ENCODE measurements at regions of chr19 and their contacts with region 1.

Region 1: GRCh38 chr19:39445265-39446111 is at the start of gene SUPT5H:
- DNase-seq: peak; percentile 97
- H3K4me3 Mint-ChIP-seq: peak within 1 kb of the TSS; percentile 91
- H3K27ac Mint-ChIP-seq: peak within 1 kb of the TSS; percentile 94
- H3K4me1 Mint-ChIP-seq: peaks cover 41% of the 10 kb centered on the region
- H3K27me3 Mint-ChIP-seq: no peaks in the 10 kb centered on the region
- total RNA-seq, gene SUPT5H: 200 and 203 TPM in 2 replicates

Region 2: GRCh38 chr19:39319892-39320248 is 125.6 kb before region 1 on chr19:
- intact Hi-C with region 1: no loop called
- DNase-seq: no peak
- H3K4me3 Mint-ChIP-seq: peak overlapping the region; percentile 81
- H3K27ac Mint-ChIP-seq: no peak overlapping the region
- H3K4me1 Mint-ChIP-seq: peaks cover 23% of the 10 kb centered on the region
- H3K27me3 Mint-ChIP-seq: no peaks in the 10 kb centered on the region

Region 3: GRCh38 chr19:39341719-39342604 is 103.5 kb before region 1 on chr19 and contains the start of gene SAMD4B:
- intact Hi-C with region 1: loop called (anchors 1 kb)
- DNase-seq: peak; percentile 99
- H3K4me3 Mint-ChIP-seq: peak within 1 kb of the TSS; percentile 99
- H3K27ac Mint-ChIP-seq: peak within 1 kb of the TSS; percentile 96
- H3K4me1 Mint-ChIP-seq: peaks cover 73% of the 10 kb centered on the region
- H3K27me3 Mint-ChIP-seq: no peaks in the 10 kb centered on the region
- total RNA-seq, gene SAMD4B: 71.3 and 71.8 TPM in 2 replicates

Region 4: GRCh38 chr19:39480337-39481228 is 35.1 kb after region 1 on chr19 and contains the start of gene TIMM50:
- intact Hi-C with region 1: loop called (anchors 1 kb)
- DNase-seq: peak; percentile 96
- H3K4me3 Mint-ChIP-seq: peak within 1 kb of the TSS; percentile 95
- H3K27ac Mint-ChIP-seq: peak within 1 kb of the TSS; percentile 94
- H3K4me1 Mint-ChIP-seq: peaks cover 28% of the 10 kb centered on the region
- H3K27me3 Mint-ChIP-seq: no peaks in the 10 kb centered on the region
- total RNA-seq, gene TIMM50: 121 and 127 TPM in 2 replicates

Region 5: GRCh38 chr19:39492225-39492624 is 46.7 kb after region 1 on chr19:
- intact Hi-C with region 1: no loop called
- DNase-seq: no peak
- H3K4me3 Mint-ChIP-seq: no peak overlapping the region
- H3K27ac Mint-ChIP-seq: no peak overlapping the region
- H3K4me1 Mint-ChIP-seq: no peaks in the 10 kb centered on the region
- H3K27me3 Mint-ChIP-seq: peaks cover 5% of the 10 kb centered on the region

Region 6: DNA sequence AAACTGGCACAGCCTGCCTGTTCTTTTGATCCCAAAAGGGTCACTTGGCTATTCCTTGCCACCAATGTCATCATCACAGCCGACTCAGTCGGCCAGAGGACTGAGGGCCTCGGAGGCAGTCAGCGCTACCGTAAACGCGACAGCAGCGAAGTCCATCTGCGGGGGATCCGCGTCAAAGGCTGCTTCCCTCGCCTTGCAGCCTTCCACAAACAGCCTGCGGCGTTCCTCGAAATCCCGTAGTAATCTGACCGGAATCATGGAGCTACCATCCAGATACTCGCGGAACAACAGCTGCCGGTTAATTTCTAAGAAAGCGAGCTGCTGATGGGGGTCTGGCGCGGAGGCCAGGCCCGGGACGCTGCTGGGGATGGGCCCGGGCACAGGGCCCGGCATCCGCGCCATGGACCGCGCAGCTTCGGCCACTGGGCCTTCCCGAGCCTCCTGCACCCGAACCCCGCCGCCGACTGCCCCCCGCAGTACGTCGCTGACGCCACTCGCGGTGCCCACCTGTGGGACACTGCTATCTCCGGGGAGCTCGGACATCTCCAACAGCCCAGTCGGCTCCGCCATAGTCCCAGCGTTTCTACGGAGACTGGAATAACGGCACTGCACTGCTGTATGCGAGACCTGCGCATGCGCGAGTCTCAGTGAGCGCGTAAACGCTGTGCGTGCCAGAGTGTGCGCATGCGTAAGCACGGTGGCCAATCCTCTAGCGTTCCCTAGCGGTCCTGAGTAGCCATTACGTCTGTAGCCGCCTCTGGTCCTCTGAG is 86.9 kb after region 1 on chr19 and contains the start of gene EID2B:
- intact Hi-C with region 1: loop called (anchors 1 kb)
- DNase-seq: peak; percentile 94
- H3K4me3 Mint-ChIP-seq: peak within 1 kb of the TSS; percentile 92
- H3K27ac Mint-ChIP-seq: peak within 1 kb of the TSS; percentile 84
- H3K4me1 Mint-ChIP-seq: peaks cover 14% of the 10 kb centered on the region
- H3K27me3 Mint-ChIP-seq: peaks cover 2% of the 10 kb centered on the region
- total RNA-seq, gene EID2B: 3.2 and 3.7 TPM in 2 replicates

Region 7: GRCh38 chr19:39671738-39672363 is 226.4 kb after region 1 on chr19:
- intact Hi-C with region 1: loop called (anchors 1 kb)
- DNase-seq: peak; percentile 50
- H3K4me3 Mint-ChIP-seq: no peak overlapping the region
- H3K27ac Mint-ChIP-seq: no peak overlapping the region
- H3K4me1 Mint-ChIP-seq: peaks cover 32% of the 10 kb centered on the region
- H3K27me3 Mint-ChIP-seq: peaks cover 5% of the 10 kb centered on the region

Region 8: GRCh38 chr19:40090241-40091204 is 645.0 kb after region 1 on chr19 and contains the start of gene ZNF780A:
- intact Hi-C with region 1: loop called (anchors 1 kb)
- DNase-seq: peak; percentile 73
- H3K4me3 Mint-ChIP-seq: peak within 1 kb of the TSS; percentile 100
- H3K27ac Mint-ChIP-seq: peak within 1 kb of the TSS; percentile 99
- H3K4me1 Mint-ChIP-seq: peaks cover 43% of the 10 kb centered on the region
- H3K27me3 Mint-ChIP-seq: peaks cover 3% of the 10 kb centered on the region
- total RNA-seq, gene ZNF780A: 14.8 and 16.7 TPM in 2 replicates

Region 9: DNA sequence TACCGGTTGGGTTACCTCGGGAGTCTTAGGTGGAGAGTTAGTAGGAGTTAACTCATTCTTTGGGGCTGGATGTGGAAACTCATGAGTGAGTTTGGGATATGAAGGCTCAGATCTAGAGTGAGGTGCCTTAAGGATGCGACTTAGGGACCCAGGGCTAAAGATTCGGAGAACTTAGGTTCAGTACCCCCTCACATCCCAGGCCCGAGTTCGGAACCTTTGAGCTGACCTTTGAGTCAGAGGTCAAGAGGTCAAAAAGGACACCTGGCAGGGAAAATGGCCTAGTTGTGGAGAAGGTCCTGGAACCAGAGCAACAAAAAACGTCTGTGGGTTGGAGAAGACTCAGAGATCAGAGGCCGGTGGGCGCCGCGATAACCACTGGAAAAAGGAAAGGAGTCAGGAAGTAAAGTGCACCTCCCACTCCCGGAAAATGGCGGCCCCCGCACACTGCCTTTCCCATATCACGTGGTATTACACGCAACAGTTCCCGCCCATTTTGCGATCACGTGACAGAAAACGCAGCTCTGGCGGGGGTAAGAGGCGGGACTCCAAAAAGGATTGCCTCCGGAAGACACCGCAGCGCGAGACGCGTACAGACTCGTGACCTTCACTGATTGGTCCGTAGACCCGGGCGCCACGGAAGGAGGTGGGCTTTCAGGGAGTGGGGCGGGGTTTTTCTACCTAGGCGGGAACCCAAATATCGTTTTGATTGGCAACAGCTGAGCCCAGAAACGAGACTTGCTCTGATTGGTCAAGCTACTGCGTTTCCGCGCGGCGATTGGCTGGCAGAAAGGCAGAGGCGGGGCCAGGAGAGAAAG is 1304.8 kb after region 1 on chr19 and contains the start of gene ACTMAP:
- intact Hi-C with region 1: no loop called
- DNase-seq: peak; percentile 100
- H3K4me3 Mint-ChIP-seq: peak within 1 kb of the TSS; percentile 99
- H3K27ac Mint-ChIP-seq: peak within 1 kb of the TSS; percentile 99
- H3K4me1 Mint-ChIP-seq: peaks cover 27% of the 10 kb centered on the region
- H3K27me3 Mint-ChIP-seq: no peaks in the 10 kb centered on the region
- total RNA-seq, gene ACTMAP: 9.5 and 10.0 TPM in 2 replicates

Measured in activated T-helper 1 cell treated with anti-CD3 and anti-CD28 coated beads, Interleukin-12 subunit alpha, Interleukin-12 subunit beta, Interleukin-2, Interleukin-4 antibody, amounts not matched to agents 30 ng/mL and 10 ng/mL and 1 ng/mL, durations not matched to agents 14 hours and 24 hours and 36 hours (primary cell).